Left cardiac atrium (tissue), 4 donors: ENCODE measurements at regions of chr7 and their contacts with region 1.

Region 1: GRCh38 chr7:85840554-85840953 is 653.7 kb upstream of the SEMA3D start:
- DNase-seq: no peak
- ATAC-seq: no peak

Region 2: GRCh38 chr7:85041605-85042216 is 798.8 kb before region 1 on chr7:
- intact Hi-C with region 1: loop called in 1 of 2 experiments (anchors 10 kb)
- DNase-seq: peak; percentile 58
- ATAC-seq: peak; percentile 47 to 73

Region 3: GRCh38 chr7:85896531-85896930 is 56.0 kb after region 1 on chr7:
- intact Hi-C with region 1: no loop called
- DNase-seq: no peak
- ATAC-seq: no peak

Region 4: DNA sequence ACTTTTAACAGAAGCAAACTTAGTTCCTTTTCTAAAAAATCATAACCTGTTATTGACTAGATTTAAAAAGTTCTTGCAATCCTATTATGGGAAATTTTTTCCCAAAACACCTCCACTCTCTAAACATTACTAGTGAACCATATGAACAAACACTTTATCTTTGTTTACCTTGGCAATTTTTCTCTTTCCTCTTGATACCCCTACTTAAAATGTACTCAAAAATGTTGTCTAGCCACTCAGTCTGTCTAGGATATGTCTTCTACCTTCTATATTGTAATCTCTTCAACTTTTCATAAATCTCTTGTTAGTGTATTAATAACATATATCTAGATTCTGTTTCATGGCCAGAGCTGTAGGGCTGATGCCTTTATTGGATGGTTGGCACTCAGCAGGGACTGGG is 173.1 kb after region 1 on chr7:
- intact Hi-C with region 1: no loop called
- DNase-seq: no peak
- ATAC-seq: no peak

Region 5: DNA sequence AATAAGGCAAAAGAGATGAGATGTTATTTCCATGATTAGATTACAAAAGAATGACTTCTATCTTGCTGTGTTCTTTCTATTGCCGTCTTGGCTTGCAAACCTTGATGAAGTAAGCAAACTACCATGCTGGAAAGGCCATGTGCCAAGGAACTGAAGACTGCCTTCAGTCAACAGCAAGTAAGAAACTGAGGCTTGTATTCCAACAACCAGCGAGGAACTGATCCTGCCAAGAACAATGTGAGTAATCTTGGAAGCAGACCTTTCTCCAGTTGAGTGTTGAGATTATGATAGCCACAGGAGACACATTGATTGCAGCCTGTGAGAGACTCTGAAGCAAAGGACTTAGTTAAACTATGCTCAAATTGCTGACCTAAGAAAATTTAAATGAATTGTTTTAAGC is 638.6 kb after region 1 on chr7:
- intact Hi-C with region 1: no loop called
- DNase-seq: no peak
- ATAC-seq: peak; percentile 34 to 73